ENCODE measurements at regions of chr7 and their contacts with region 1.

Region 1: GRCh38 chr7:142782922-142783900 is 12.4 kb downstream of the PRSS2 start:
- DNase-seq: peak; percentile 87 to 93 (median 89)
- ATAC-seq: peak; percentile 84 to 91
- H3K4me3 ChIP-seq: peak overlapping the region; percentile 46
- H3K27ac ChIP-seq: no peak overlapping the region
- H3K4me1 ChIP-seq: no peaks in the 10 kb centered on the region
- H3K27me3 ChIP-seq: no peaks in the 10 kb centered on the region

Region 2: DNA sequence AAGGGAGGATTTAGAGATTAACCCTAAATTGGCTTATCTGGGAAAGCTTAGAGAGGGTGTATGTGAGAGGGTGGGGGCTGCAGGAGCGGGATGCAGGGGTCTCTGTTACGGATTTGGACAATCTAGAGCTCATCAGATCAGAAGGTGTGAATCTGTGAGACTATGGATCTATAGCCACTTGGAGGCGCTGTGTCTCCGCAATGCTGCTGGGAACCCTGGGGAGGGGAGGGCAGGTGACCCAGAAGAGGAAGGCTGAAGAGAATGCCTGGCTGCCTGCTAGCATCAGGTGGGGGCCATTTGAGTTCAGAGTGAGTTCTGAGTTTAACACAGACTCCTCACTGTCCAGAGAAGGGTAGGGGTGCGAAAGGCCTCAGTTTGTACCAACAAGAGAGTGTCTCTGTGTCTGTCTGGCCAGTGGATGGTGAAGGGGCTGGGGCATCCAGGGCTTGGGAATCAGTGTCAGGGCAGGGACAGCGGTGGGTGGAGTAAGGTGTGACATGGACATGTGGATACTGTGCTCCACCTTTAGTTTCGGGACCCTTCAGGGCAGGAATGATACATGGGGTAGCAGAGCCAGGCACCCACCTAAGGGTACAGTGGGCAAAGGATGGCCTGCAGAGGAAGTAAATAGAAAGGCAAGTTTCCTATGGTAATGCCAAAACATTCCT is 338.1 kb before region 1 on chr7:
- intact Hi-C with region 1: no loop called
- DNase-seq: no peak
- ATAC-seq: no peak
- H3K4me3 ChIP-seq: no peak overlapping the region
- H3K27ac ChIP-seq: no peak overlapping the region
- H3K4me1 ChIP-seq: no peaks in the 10 kb centered on the region
- H3K27me3 ChIP-seq: no peaks in the 10 kb centered on the region

Region 3: GRCh38 chr7:142632291-142633134 is 150.7 kb before region 1 on chr7:
- intact Hi-C with region 1: loop called in 2 of 4 experiments (anchors 5 kb)
- DNase-seq: peak; percentile 23 to 67 (median 39)
- ATAC-seq: peak; percentile 45 to 76
- H3K4me3 ChIP-seq: no peak overlapping the region
- H3K27ac ChIP-seq: no peak overlapping the region
- H3K4me1 ChIP-seq: no peaks in the 10 kb centered on the region
- H3K27me3 ChIP-seq: no peaks in the 10 kb centered on the region

Region 4: DNA sequence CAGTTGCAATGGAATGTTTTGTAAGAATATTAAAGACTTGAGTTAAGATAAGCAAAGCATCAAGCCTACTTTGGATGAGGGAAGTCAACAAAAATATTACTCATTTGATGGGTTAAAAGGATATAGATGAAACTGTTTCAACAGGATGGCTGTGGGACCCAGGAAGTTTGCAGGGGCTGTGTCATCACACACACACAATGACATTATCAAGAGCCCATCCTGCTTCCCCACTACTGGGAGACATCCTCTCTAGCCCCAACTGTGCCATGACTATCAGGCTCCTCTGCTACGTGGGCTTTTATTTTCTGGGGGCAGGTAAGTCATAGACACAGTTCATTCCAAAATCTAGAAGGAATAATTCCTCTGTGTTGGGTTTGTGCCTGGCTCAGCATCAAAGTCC is 112.7 kb before region 1 on chr7:
- intact Hi-C with region 1: loop called in 1 of 4 experiments (anchors 10 kb)
- DNase-seq: no peak
- ATAC-seq: no peak
- H3K4me3 ChIP-seq: no peak overlapping the region
- H3K27ac ChIP-seq: no peak overlapping the region
- H3K4me1 ChIP-seq: no peaks in the 10 kb centered on the region
- H3K27me3 ChIP-seq: no peaks in the 10 kb centered on the region

Region 5: GRCh38 chr7:142711746-142712619 is 71.2 kb before region 1 on chr7:
- intact Hi-C with region 1: loop called (anchors 2 to 5 kb)
- DNase-seq: no peak
- ATAC-seq: no peak
- H3K4me3 ChIP-seq: no peak overlapping the region
- H3K27ac ChIP-seq: no peak overlapping the region
- H3K4me1 ChIP-seq: no peaks in the 10 kb centered on the region
- H3K27me3 ChIP-seq: no peaks in the 10 kb centered on the region

Region 6: DNA sequence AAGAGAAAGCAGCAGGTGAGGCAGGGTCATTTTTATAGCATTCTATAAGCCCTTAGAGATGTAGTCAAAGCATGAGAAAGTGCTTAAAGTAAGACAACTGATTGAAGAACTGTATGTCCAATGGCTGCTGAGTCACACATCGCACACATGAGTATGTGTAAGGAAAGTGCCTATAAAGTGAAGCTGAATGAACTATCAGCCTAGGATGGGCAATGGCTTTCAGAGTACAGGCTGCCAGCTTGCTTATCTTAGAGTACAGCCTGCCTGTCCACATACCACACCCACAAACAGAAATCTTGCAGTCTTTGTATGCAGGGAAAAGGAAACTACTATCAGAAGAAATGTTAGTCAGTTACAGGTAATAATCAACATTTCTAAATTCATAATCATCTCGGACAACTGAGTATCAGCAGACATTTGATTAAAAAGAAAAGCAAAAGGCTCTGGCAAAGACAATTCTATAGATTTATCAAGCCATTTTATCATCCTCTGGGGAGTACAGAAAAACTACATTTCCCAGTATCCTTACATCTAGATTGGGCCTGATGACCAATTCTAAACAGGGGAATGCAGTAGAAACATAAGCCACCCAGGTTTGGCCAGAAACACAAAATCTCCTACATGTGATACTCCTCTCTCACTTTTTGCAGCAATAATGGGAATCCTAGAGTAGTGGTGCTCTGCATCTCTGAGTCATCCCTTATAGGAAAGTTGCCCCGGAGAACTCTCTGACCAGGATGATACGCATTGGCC is 55.4 kb after region 1 on chr7:
- intact Hi-C with region 1: no loop called
- DNase-seq: no peak
- ATAC-seq: no peak
- H3K4me3 ChIP-seq: no peak overlapping the region
- H3K27ac ChIP-seq: no peak overlapping the region
- H3K4me1 ChIP-seq: no peaks in the 10 kb centered on the region
- H3K27me3 ChIP-seq: no peaks in the 10 kb centered on the region